Breast epithelium (tissue), 4 donors: ENCODE measurements at regions of chr6 and their contacts with region 1.

Region 1: DNA sequence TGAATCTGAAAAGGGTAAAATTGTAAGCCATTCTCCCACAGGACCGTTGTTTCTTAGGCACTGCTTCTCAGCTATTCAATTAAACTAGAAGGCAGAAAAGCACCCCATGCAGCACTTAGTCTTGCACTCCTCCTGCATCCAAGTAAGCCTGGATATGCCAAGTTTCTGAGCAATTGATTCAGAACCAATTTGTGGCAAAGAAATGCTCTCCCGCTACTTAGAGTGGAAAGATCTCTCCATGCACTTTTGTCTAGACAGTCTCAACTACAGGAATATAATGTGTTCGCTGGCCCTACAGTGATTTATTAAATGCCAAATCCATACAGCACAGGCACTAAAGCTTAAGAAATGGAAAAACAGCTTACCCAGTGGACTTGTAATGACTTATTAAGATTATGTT is 338.5 kb downstream of the HACE1 start:
- DNase-seq: no peak
- H3K4me3 ChIP-seq: no peak overlapping the region
- H3K27ac ChIP-seq: no peak overlapping the region
- H3K4me1 ChIP-seq: no peaks in the 10 kb centered on the region
- H3K27me3 ChIP-seq: no peaks in the 10 kb centered on the region
- CTCF ChIP-seq: no peak
- POLR2A ChIP-seq: no peak

Region 2: DNA sequence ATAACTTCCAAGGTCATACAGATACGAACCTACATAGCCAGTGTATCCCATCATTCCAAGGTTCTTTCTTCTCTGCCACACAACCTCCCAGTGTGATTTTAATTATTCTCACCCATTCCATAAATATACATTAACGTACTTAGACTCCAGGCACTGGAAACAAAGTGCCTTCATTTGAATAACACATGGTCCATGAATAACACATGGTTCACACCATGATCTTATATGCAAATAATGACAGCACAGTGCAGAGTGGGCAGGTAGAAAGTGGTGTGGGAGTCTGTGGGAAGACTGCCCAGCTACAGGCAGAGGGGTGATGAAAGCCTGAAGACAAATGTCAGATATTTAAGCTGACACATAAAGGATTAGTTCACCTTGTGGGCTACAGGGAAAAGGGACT is 86.7 kb before region 1 on chr6:
- intact Hi-C with region 1: no loop called
- DNase-seq: no peak
- H3K4me3 ChIP-seq: no peak overlapping the region
- H3K27ac ChIP-seq: no peak overlapping the region
- H3K4me1 ChIP-seq: no peaks in the 10 kb centered on the region
- H3K27me3 ChIP-seq: no peaks in the 10 kb centered on the region
- CTCF ChIP-seq: no peak
- POLR2A ChIP-seq: no peak

Region 3: GRCh38 chr6:104505838-104506237 is 15.3 kb before region 1 on chr6:
- intact Hi-C with region 1: loop called (anchors 1 kb)
- DNase-seq: no peak
- H3K4me3 ChIP-seq: no peak overlapping the region
- H3K27ac ChIP-seq: no peak overlapping the region
- H3K4me1 ChIP-seq: no peaks in the 10 kb centered on the region
- H3K27me3 ChIP-seq: no peaks in the 10 kb centered on the region
- CTCF ChIP-seq: no peak
- POLR2A ChIP-seq: no peak

Region 4: DNA sequence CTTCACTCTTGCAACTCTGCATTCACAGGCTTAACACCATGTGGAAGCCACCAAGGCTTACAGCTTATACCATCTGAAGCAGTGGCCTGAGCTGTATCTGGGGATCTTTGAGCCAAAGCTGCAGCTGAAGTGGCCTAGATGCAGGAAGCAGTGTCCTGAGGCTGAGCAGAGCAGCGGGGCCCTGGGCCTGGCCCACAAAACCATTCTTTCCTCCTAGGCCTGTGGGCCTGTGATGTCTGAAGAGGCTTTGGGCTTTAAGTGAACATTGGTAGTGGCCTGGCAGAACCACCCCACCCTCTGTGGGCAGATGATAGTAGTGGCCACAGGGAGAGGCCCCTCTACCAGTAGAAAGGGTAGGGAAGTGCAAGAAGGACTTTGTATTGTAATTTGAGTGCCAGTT is 888.6 kb after region 1 on chr6:
- intact Hi-C with region 1: no loop called
- DNase-seq: no peak
- H3K4me3 ChIP-seq: no peak overlapping the region
- H3K27ac ChIP-seq: no peak overlapping the region
- H3K4me1 ChIP-seq: no peaks in the 10 kb centered on the region
- H3K27me3 ChIP-seq: no peaks in the 10 kb centered on the region
- CTCF ChIP-seq: no peak
- POLR2A ChIP-seq: no peak